Activated naive CD4-positive, alpha-beta T cell treated with anti-CD3 and anti-CD28 coated beads for 36 hours (primary cell): ENCODE measurements at regions of chr12 and their contacts with region 1.

Region 1: GRCh38 chr12:89756585-89757321 is 48.1 kb upstream of the ATP2B1 start:
- DNase-seq: peak; percentile 48
- H3K4me3 Mint-ChIP-seq: no peak overlapping the region
- H3K27ac Mint-ChIP-seq: peak overlapping the region; percentile 37
- H3K4me1 Mint-ChIP-seq: peaks cover 23% of the 10 kb centered on the region
- H3K27me3 Mint-ChIP-seq: no peaks in the 10 kb centered on the region

Region 2: GRCh38 chr12:89470741-89471509 is 285.8 kb before region 1 on chr12:
- CTCF ChIA-PET with region 1: no interaction called
- intact Hi-C with region 1: loop called (anchors 5 kb)
- DNase-seq: no peak
- H3K4me3 Mint-ChIP-seq: no peak overlapping the region
- H3K27ac Mint-ChIP-seq: no peak overlapping the region
- H3K4me1 Mint-ChIP-seq: peaks cover 44% of the 10 kb centered on the region
- H3K27me3 Mint-ChIP-seq: no peaks in the 10 kb centered on the region

Region 3: DNA sequence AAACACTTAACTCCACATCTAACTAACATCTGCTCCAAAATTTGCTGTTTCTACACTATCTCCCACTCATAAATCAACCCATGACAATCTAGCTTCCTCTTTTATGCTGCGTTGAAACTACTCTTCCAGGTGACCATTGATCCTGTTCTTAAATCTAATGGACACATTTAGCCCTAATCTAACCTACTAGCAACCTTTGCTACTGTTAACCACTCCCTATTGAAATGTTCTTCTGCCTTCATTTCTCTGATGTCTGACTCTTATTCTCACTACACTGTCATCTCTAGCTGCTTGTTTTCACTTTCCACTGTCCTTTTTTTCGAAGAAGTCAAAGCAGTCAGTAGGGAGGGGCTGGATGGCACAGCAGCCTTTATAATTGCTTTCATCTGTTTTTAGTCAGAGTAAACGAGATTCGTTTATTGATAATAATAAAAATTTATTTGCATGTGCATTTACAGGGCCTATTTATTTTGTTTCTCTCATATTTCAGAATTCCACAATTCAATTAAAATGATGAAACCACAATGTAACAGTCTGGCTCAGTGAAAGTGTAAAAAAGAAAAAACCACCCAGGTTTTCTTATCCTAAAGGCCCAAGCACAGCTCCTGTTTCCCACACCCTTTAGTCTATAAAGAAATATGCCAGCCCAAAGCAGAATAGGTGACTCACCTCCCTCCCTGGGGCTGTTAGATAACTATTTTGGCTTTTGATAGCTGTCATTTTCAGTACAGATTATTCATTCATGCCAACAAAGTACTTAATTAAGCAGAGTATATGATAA is 93.0 kb before region 1 on chr12:
- CTCF ChIA-PET with region 1: no interaction called
- intact Hi-C with region 1: loop called (anchors 1 kb)
- DNase-seq: peak; percentile 38
- H3K4me3 Mint-ChIP-seq: peak overlapping the region; percentile 16
- H3K27ac Mint-ChIP-seq: peak overlapping the region; percentile 55
- H3K4me1 Mint-ChIP-seq: peaks cover 65% of the 10 kb centered on the region
- H3K27me3 Mint-ChIP-seq: no peaks in the 10 kb centered on the region

Region 4: DNA sequence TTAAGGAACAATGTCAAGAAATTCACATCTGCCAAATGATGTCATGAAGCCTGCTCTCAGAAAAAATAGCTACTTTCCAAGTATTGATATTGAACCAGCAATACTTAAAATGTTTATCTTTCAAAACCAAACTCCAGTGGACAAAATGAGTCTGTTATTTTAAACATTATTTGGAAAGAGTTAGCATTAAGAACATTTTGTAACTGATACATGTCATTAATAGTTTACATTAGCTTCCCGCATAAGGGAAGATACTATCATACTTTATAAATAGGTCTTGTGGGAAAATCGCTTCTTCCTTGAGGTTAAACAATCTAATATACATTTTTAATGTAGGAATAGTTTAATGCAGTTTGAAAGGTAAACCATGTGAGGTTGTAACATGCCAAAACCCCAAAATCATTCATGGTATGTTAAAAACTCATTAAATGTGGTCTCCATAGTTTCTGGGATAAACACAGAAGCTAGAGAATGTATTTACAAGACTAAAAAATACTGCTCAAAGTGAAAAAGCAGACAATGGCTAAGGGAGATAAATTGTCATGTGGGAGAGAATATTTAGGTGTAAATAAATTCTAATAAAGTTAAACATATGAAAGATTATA is 25.3 kb after region 1 on chr12:
- CTCF ChIA-PET with region 1: no interaction called
- intact Hi-C with region 1: no loop called
- DNase-seq: no peak
- H3K4me3 Mint-ChIP-seq: no peak overlapping the region
- H3K27ac Mint-ChIP-seq: no peak overlapping the region
- H3K4me1 Mint-ChIP-seq: no peaks in the 10 kb centered on the region
- H3K27me3 Mint-ChIP-seq: no peaks in the 10 kb centered on the region

Region 5: GRCh38 chr12:89862511-89863179 is 105.9 kb after region 1 on chr12:
- CTCF ChIA-PET with region 1: no interaction called
- intact Hi-C with region 1: loop called (anchors 1 kb)
- DNase-seq: peak; percentile 57
- H3K4me3 Mint-ChIP-seq: peak overlapping the region; percentile 70
- H3K27ac Mint-ChIP-seq: peak overlapping the region; percentile 92
- H3K4me1 Mint-ChIP-seq: peaks cover 39% of the 10 kb centered on the region
- H3K27me3 Mint-ChIP-seq: no peaks in the 10 kb centered on the region

Region 6: GRCh38 chr12:89960011-89960507 is 203.3 kb after region 1 on chr12:
- CTCF ChIA-PET with region 1: interaction called, 3 read pairs
- intact Hi-C with region 1: loop called (anchors 1 kb)
- DNase-seq: peak; percentile 51
- H3K4me3 Mint-ChIP-seq: no peak overlapping the region
- H3K27ac Mint-ChIP-seq: no peak overlapping the region
- H3K4me1 Mint-ChIP-seq: peaks cover 14% of the 10 kb centered on the region
- H3K27me3 Mint-ChIP-seq: no peaks in the 10 kb centered on the region

Region 7: GRCh38 chr12:91250273-91250665 is 1493.5 kb after region 1 on chr12:
- CTCF ChIA-PET with region 1: no interaction called
- intact Hi-C with region 1: no loop called
- DNase-seq: no peak
- H3K4me3 Mint-ChIP-seq: no peak overlapping the region
- H3K27ac Mint-ChIP-seq: no peak overlapping the region
- H3K4me1 Mint-ChIP-seq: no peaks in the 10 kb centered on the region
- H3K27me3 Mint-ChIP-seq: peaks cover 8% of the 10 kb centered on the region